HCT116 (cell line): ENCODE measurements at regions of chr1 and their contacts with region 1.

Region 1: DNA sequence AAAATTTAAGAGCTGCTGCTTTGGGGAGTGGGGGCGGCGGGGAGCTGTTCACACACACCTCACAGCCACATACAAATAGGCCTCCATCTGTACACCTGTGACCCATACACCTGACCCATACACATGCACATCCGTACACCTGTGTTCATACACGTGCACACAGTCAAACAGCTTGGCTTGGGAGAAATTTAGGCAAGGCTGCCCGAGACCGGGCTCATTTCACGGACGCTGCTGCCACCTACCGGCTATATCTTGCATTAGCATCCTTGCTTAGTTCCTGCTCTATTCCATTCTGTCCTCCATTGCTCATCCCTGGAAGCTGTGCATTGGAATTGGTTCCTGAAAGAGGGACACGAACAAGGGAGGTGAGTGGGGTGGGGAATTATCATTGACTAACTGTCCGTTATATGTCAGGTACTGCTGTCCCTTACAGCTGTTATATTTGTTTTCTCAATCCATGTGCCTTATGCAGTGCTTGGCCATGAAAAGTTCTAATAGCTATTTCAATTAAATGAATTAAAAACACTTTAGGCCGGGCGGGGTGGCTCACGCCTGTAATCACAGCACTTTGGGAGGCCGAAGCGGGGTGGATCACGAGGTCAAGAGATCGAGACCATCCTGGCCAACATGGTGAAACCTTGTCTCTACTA is 37.1 kb upstream of the EPB41 start:
- DNase-seq: peak; percentile 79
- ATAC-seq: peak; percentile 78
- H3K4me3 ChIP-seq: no peak overlapping the region
- H3K27ac ChIP-seq: no peak overlapping the region
- H3K4me1 ChIP-seq: peaks cover 6 to 21% of the 10 kb centered on the region in 2 experiments
- H3K27me3 ChIP-seq: no peaks in the 10 kb centered on the region
- CTCF ChIP-seq: peak in 2 of 3 experiments; percentile 85 to 96; a peak in 4 of 6 replicates
- POLR2A ChIP-seq: no peak
- RAD21 ChIP-seq: no peak

Region 2: DNA sequence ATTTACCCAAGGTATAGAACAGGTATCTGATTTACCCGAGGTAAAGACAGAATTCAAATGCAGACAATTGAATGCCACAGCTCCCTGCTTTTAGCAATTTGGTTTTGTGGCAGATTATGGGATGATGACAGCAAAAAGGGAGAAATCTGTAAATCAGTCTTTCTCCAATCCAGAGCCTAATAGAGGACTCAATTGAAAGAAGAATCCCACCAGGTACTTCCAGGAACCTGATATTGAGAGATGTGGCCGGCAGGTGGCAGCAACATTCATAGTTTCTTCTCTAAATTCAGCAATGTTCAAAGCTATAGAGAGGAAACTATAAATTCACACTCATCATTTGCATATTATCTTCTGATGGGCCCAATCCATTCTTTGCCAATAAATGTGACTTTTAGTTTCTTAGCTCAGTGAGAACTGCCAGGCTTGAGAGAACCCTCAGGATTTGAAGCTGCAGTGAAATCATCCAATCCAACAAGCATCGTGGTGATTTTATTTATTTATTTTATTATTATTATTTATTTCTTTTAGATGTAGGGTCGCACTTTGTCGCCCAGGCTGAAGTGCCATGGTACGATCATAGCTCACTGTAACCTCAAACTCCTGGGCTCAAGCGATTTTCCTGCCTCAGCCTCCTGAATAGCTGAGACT is 517.5 kb before region 1 on chr1:
- CTCF ChIA-PET with region 1: interaction called, 10 read pairs
- POLR2A ChIA-PET with region 1: no interaction called
- RAD21 ChIA-PET with region 1: no interaction called
- intact Hi-C with region 1: loop called (anchors 10 kb)
- DNase-seq: no peak
- ATAC-seq: peak; percentile 91
- H3K4me3 ChIP-seq: no peak overlapping the region
- H3K27ac ChIP-seq: no peak overlapping the region
- H3K4me1 ChIP-seq: peaks cover 0 to 3% of the 10 kb centered on the region in 2 experiments; a peak in 1 of 4 replicates
- H3K27me3 ChIP-seq: no peaks in the 10 kb centered on the region
- CTCF ChIP-seq: peak; percentile 63 to 77 (median 66); a peak in 5 of 6 replicates
- POLR2A ChIP-seq: no peak
- RAD21 ChIP-seq: peak; percentile 73

Region 3: GRCh38 chr1:28581536-28582247 is 295.6 kb before region 1 on chr1:
- CTCF ChIA-PET with region 1: no interaction called
- POLR2A ChIA-PET with region 1: interaction called, 11 read pairs
- RAD21 ChIA-PET with region 1: no interaction called
- intact Hi-C with region 1: no loop called
- DNase-seq: peak; percentile 90
- ATAC-seq: peak; percentile 79
- H3K4me3 ChIP-seq: peak overlapping the region; percentile 97 to 99
- H3K27ac ChIP-seq: peak overlapping the region; percentile 93
- H3K4me1 ChIP-seq: peaks cover 9 to 29% of the 10 kb centered on the region in 2 experiments; a peak in 3 of 4 replicates
- H3K27me3 ChIP-seq: no peaks in the 10 kb centered on the region
- CTCF ChIP-seq: 0 out of 6 replicates have a peak, but pooled peaks of 1 of the 3 experiments have one; percentile 2
- POLR2A ChIP-seq: peak; percentile 99
- RAD21 ChIP-seq: no peak

Region 4: GRCh38 chr1:28648474-28649198 is 228.6 kb before region 1 on chr1 and contains the start of gene RNU11:
- CTCF ChIA-PET with region 1: interaction called, 7 read pairs
- POLR2A ChIA-PET with region 1: interaction called, 44 read pairs
- RAD21 ChIA-PET with region 1: interaction called in 1 of 2 experiments, 4 read pairs
- intact Hi-C with region 1: no loop called
- DNase-seq: peak; percentile 98
- ATAC-seq: peak; percentile 74
- H3K4me3 ChIP-seq: peak within 1 kb of the TSS; percentile 31 to 51
- H3K27ac ChIP-seq: peak within 1 kb of the TSS; percentile 86
- H3K4me1 ChIP-seq: peaks cover 18 to 36% of the 10 kb centered on the region in 2 experiments
- H3K27me3 ChIP-seq: no peaks in the 10 kb centered on the region
- CTCF ChIP-seq: no peak
- POLR2A ChIP-seq: peak; percentile 100
- RAD21 ChIP-seq: no peak
- total RNA-seq, gene RNU11: not detected

Region 5: DNA sequence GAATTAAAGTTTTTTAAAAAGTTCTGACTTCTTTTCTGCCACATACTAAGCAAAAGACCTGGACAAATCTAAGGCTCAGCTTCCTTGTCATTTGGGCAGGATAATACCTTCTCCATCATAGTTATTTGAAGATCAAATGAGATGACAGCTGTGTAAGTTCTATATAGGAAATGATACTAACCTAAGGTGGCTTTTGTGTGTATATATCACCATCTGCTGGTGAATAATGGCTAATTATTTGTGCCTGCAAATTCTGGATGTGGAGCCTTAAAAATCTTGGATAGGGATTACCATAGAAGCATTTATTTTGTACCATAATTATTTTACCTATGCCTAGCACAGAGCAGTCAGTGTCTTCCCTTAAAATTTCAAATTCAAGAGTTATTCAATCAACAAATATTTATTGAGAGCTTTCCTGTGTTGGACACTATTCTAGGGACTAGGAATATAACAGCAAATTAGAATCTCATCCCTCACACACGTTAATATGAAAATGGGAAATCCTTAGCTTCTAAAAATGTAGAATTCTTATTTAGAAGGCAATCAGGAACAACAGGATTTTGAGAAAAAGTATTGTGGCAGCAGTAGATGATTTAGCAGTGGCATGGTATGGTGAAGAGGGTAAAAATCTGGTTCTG is 156.7 kb after region 1 on chr1:
- CTCF ChIA-PET with region 1: interaction called, 122 read pairs
- POLR2A ChIA-PET with region 1: interaction called, 11 read pairs
- RAD21 ChIA-PET with region 1: interaction called, 14 to 18 read pairs
- intact Hi-C with region 1: loop called (anchors 1 kb)
- DNase-seq: peak; percentile 24
- ATAC-seq: peak; percentile 77
- H3K4me3 ChIP-seq: no peak overlapping the region
- H3K27ac ChIP-seq: no peak overlapping the region
- H3K4me1 ChIP-seq: no peaks in the 10 kb centered on the region
- H3K27me3 ChIP-seq: no peaks in the 10 kb centered on the region
- CTCF ChIP-seq: peak; percentile 45 to 92 (median 75)
- POLR2A ChIP-seq: no peak
- RAD21 ChIP-seq: peak; percentile 96

Region 6: DNA sequence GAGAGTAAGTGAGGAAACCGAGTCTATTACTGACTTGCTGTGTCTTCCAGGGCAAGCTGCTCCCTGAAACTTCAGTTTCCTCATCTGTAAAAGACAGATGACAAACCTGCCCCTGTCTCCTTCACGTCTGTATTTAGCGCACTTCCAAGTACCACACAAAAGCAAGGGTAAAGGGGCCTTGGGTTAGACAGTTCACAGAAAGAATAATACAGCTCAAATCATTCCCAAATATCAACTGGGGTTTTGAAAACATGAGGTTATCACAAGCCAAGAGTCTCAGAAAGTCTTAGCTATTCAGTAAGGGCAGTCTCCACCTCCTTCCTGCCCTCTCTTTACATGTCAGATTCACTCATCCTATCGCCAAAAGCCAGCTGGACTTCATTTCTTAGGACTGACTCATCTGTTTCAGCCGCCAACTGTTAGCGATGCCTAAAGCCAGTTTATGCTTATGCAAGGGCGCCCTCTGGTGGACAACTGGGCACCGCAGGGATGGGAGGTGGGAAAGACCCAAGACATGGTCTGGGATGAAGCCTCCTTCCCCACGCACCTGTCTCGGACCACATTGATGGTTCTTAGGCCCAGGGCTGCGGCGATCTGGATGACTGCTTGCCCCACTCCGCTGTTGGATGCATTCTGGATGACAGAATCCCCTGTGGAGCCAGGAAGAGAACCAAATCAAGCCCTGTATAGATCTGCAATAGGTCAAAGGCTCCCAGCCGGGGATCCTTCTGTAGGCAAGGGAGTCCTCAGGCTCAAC is 325.5 kb after region 1 on chr1:
- CTCF ChIA-PET with region 1: interaction called, 59 read pairs
- POLR2A ChIA-PET with region 1: interaction called, 5 read pairs
- RAD21 ChIA-PET with region 1: interaction called, 7 read pairs
- intact Hi-C with region 1: loop called (anchors 1 kb)
- DNase-seq: peak; percentile 94
- ATAC-seq: peak; percentile 96
- H3K4me3 ChIP-seq: peak overlapping the region in 1 of 2 experiments; percentile 2; a peak in 1 of 4 replicates
- H3K27ac ChIP-seq: peak overlapping the region; percentile 23; the same call in 1 of the 2 replicates
- H3K4me1 ChIP-seq: peaks cover 7 to 8% of the 10 kb centered on the region in 2 experiments
- H3K27me3 ChIP-seq: no peaks in the 10 kb centered on the region
- CTCF ChIP-seq: peak; percentile 90 to 98 (median 98)
- POLR2A ChIP-seq: no peak
- RAD21 ChIP-seq: peak; percentile 98